ENCODE measurements at regions of chr21 and their contacts with region 1.

Region 1: DNA sequence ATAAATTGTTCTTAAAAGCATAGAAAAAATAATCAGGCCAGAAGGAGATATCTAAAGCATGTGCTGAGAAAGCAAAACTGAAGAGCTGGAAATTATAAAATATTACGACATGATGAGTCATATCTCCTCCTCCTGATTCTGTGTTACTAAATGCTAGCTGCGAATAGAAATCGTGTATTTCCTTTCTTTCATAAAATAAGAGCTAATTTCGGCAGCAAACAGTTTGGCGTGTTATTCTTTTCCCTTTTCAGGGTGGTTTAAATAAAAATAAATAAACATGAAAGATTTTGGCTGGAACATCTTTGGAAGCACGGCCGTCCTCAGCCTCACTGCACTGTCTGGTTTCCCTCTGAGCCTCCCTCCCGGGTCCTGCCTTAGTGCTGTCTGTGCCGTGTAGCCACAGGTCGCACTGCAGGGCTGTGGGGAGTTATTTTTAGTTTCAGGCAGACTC is 56.0 kb downstream of the ADARB1 start:
- DNase-seq: no peak
- H3K4me3 ChIP-seq: no peak overlapping the region
- H3K4me3 Mint-ChIP-seq: no peak overlapping the region
- H3K27ac ChIP-seq: no peak overlapping the region
- H3K27ac Mint-ChIP-seq: no peak overlapping the region
- H3K4me1 ChIP-seq: no peaks in the 10 kb centered on the region
- H3K4me1 Mint-ChIP-seq: peaks cover 16 to 34% (median 24%) of the 10 kb centered on the region in 4 donors
- H3K27me3 ChIP-seq: no peaks in the 10 kb centered on the region
- H3K27me3 Mint-ChIP-seq: no peaks in the 10 kb centered on the region

Region 2: DNA sequence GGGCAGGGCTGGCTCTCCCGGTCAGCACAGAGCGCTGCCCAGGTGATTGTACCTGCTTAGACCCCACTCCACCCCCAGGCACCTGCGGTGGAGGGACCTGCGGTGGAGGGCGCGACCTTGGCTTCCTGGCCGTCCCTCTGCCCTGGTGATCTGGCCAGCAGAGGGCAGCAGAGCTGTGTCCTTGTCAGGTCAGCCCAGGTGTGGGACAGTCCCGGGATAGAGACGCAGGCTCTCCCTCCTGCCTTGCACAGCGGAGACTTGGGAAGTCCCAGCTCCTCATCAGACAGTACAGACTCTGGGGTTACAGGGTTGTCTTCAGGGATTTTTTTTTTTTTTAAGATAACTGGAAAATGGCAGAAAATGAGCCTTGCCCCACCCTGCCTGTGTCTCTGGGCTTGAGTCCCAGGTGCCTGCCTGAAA is 180.6 kb before region 1 on chr21:
- CTCF ChIA-PET with region 1: interaction called, 363 read pairs
- POLR2A ChIA-PET with region 1: interaction called, 10 read pairs
- intact Hi-C with region 1: no loop called
- DNase-seq: peak; percentile 72 to 80 (median 75)
- H3K4me3 ChIP-seq: no peak overlapping the region
- H3K4me3 Mint-ChIP-seq: no peak overlapping the region
- H3K27ac ChIP-seq: no peak overlapping the region
- H3K27ac Mint-ChIP-seq: peak overlapping the region in 1 of 7 donors; percentile 52
- H3K4me1 ChIP-seq: peaks cover 9% of the 10 kb centered on the region
- H3K4me1 Mint-ChIP-seq: peaks cover 4 to 22% (median 11%) of the 10 kb centered on the region in 4 donors
- H3K27me3 ChIP-seq: no peaks in the 10 kb centered on the region
- H3K27me3 Mint-ChIP-seq: no peaks in the 10 kb centered on the region

Region 3: GRCh38 chr21:44965251-44966022 is 164.9 kb before region 1 on chr21:
- CTCF ChIA-PET with region 1: interaction called, 45 read pairs
- POLR2A ChIA-PET with region 1: interaction called, 4 read pairs
- intact Hi-C with region 1: loop called (anchors 5 kb)
- DNase-seq: peak in 4 of 5 donors; percentile 18 to 34 (median 29)
- H3K4me3 ChIP-seq: peak overlapping the region in 1 of 2 donors; percentile 3
- H3K4me3 Mint-ChIP-seq: peak overlapping the region; percentile 46 to 87 (median 78)
- H3K27ac ChIP-seq: no peak overlapping the region
- H3K27ac Mint-ChIP-seq: peak overlapping the region in 2 of 7 donors; percentile 19 to 22
- H3K4me1 ChIP-seq: peaks cover 37% of the 10 kb centered on the region
- H3K4me1 Mint-ChIP-seq: peaks cover 25 to 55% (median 37%) of the 10 kb centered on the region in 4 donors
- H3K27me3 ChIP-seq: no peaks in the 10 kb centered on the region
- H3K27me3 Mint-ChIP-seq: no peaks in the 10 kb centered on the region

Region 4: GRCh38 chr21:45091550-45092322 is 38.6 kb before region 1 on chr21:
- CTCF ChIA-PET with region 1: interaction called, 12 read pairs
- POLR2A ChIA-PET with region 1: no interaction called
- intact Hi-C with region 1: no loop called
- DNase-seq: no peak
- H3K4me3 ChIP-seq: no peak overlapping the region
- H3K4me3 Mint-ChIP-seq: no peak overlapping the region
- H3K27ac ChIP-seq: no peak overlapping the region
- H3K27ac Mint-ChIP-seq: peak overlapping the region in 1 of 7 donors; percentile 36
- H3K4me1 ChIP-seq: peaks cover 48% of the 10 kb centered on the region
- H3K4me1 Mint-ChIP-seq: peaks cover 46 to 77% (median 60%) of the 10 kb centered on the region in 4 donors
- H3K27me3 ChIP-seq: no peaks in the 10 kb centered on the region
- H3K27me3 Mint-ChIP-seq: no peaks in the 10 kb centered on the region

Region 5: DNA sequence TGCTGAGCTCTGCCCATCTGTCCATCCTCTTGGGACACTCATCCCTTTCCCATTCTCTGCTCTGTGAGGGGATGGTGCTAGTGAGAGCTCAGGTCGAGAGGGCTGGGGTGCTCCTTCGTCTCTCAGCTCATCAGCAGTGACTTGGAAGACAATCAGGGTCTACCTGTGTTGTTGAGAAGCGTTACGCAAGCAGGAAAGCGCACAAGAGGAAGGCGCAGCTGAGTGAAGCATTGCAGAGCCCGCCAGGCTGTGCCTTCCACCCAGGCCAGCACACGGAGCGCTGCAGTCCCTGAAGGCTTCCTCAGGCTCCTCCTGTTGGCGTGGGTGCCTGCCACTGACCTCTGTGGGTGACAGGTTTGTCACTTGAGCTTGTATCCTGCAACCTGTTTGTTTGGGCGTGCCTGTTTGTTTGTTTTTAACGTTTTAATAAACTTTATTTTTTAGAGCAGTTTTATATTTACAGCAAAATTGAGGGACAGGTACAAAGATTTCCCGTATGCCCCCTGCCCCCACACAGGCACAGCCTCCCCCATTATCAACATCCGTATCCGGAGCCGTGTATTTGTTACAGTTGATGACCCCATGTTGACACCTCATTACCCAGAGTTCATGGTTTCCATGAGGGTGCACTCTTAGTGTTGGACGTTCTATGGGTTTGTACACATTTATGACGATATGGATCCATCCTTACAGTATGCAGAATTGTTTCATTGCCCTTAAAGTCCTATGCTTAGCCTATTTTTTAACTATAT is 19.3 kb before region 1 on chr21:
- CTCF ChIA-PET with region 1: interaction called, 16 read pairs
- POLR2A ChIA-PET with region 1: no interaction called
- intact Hi-C with region 1: no loop called
- DNase-seq: no peak
- H3K4me3 ChIP-seq: no peak overlapping the region
- H3K4me3 Mint-ChIP-seq: peak overlapping the region in 3 of 8 donors; percentile 1 to 54 (median 21)
- H3K27ac ChIP-seq: no peak overlapping the region
- H3K27ac Mint-ChIP-seq: peak overlapping the region in 1 of 7 donors; percentile 37
- H3K4me1 ChIP-seq: peaks cover 36% of the 10 kb centered on the region
- H3K4me1 Mint-ChIP-seq: peaks cover 42 to 75% (median 59%) of the 10 kb centered on the region in 4 donors
- H3K27me3 ChIP-seq: no peaks in the 10 kb centered on the region
- H3K27me3 Mint-ChIP-seq: no peaks in the 10 kb centered on the region

Measured in CD4-positive, alpha-beta memory T cell (primary cell).